Activated CD8-positive, alpha-beta T cell treated with anti-CD3 and anti-CD28 coated beads for 36 hours (primary cell): ENCODE measurements at regions of chr10 and their contacts with region 1.

Region 1: GRCh38 chr10:99711129-99711719 is 20.7 kb downstream of the COX15 start:
- DNase-seq: peak; percentile 56
- ATAC-seq: peak; percentile 72
- H3K4me3 Mint-ChIP-seq: no peak overlapping the region
- H3K27ac Mint-ChIP-seq: no peak overlapping the region
- H3K4me1 Mint-ChIP-seq: peaks cover 10% of the 10 kb centered on the region
- H3K27me3 Mint-ChIP-seq: no peaks in the 10 kb centered on the region
- CTCF ChIP-seq: peak; percentile 59

Region 2: DNA sequence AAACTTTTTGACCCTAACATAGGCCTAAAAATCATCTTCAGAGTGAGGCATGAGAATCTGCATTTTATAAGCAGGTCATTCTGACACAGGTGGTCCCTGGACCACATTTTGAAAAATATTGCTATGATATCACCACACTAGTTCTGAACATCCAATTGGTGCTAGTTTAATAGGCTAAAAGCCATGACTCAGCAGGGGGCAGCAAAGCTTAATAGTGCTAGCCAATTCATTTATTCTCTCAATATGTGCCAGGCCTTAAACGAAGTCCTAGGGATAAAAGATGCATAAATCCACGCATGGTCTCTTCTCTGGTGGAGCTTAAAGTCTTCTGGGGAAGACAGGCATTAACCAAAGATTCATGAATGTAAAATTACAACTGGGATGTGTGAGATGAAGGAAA is 80.8 kb before region 1 on chr10:
- CTCF ChIA-PET with region 1: interaction called, 15 read pairs
- POLR2A ChIA-PET with region 1: no interaction called
- intact Hi-C with region 1: no loop called
- DNase-seq: peak; percentile 50
- ATAC-seq: no peak
- H3K4me3 Mint-ChIP-seq: no peak overlapping the region
- H3K27ac Mint-ChIP-seq: no peak overlapping the region
- H3K4me1 Mint-ChIP-seq: no peaks in the 10 kb centered on the region
- H3K27me3 Mint-ChIP-seq: peaks cover 13% of the 10 kb centered on the region
- CTCF ChIP-seq: peak; percentile 13